Heart right ventricle (tissue), 16 donors: ENCODE measurements at regions of chr7 and their contacts with region 1.

Region 1: DNA sequence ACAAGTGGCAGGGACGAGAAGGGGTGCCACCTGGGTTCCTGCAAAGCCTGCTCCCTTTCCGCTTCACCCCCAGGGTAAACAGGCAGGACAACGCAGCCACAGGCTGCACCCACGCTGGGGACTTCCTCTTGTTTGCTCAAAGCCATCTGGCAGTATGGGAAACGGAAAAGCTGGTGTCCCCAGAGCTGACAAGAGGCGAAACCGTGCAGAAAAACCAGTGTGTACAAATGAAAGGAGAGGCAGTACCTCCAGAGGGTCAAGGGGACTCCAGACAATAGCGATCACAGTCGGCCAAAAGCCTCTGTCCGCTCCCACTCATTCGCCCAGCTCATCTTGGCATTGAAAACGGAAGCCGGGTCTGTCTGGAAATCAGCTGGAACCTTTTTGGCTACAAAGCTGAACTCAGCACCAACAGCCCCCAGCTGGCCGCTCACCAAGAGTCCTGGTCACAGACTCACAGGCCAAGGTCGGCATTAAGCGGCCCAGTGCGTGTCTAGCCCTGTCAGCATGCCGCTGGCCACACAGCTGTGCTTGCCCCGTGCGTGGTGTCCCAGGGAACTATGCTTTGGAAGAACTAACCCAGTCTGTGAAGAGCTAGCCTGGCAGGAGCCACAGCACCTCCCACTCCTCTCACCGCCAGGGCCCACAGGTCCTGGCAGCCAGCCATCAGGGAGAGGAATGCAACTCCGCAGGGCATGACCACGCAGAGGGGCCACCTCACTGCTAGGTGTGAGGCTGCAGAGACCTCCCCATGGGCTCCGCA is 10.4 kb downstream of the TNS3 start:
- DNase-seq: peak; percentile 76 to 83
- ATAC-seq: peak; percentile 69 to 87 (median 76)
- H3K4me3 ChIP-seq: peak overlapping the region in 6 of 10 donors; percentile 2 to 28 (median 10)
- H3K27ac ChIP-seq: peak overlapping the region; percentile 65 to 92 (median 78)
- H3K4me1 ChIP-seq: peaks cover 7 to 84% (median 58%) of the 10 kb centered on the region in 9 donors
- H3K27me3 ChIP-seq: no peaks in the 10 kb centered on the region
- CTCF ChIP-seq: peak in 1 of 9 donors; percentile 11

Region 2: DNA sequence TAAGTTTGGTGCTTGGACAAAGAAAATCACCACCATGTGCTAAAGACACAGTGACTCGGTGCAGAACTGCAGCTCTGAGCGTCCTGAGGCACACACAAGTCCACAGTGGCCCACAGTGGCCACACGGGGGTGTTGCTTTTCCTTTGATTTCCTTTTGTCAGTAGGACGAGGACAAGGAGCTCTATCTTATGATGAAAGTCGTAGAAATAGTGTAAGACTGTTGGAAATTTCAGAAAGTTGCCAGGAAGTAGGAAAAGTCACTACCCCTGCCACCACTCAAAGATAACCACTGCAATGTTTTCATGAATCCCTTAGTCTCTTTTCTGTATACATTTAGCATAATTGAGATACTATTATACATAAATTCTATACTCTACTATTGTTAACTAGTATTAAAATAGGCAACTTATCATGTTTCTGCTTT is 135.6 kb before region 1 on chr7:
- intact Hi-C with region 1: loop called in 3 of 10 experiments (anchors 10 kb)
- DNase-seq: peak; percentile 68 to 74
- ATAC-seq: peak; percentile 74 to 91 (median 88)
- H3K4me3 ChIP-seq: no peak overlapping the region
- H3K27ac ChIP-seq: no peak overlapping the region
- H3K4me1 ChIP-seq: peaks cover 0 to 10% (median 0%) of the 10 kb centered on the region in 9 donors
- H3K27me3 ChIP-seq: no peaks in the 10 kb centered on the region
- CTCF ChIP-seq: peak; percentile 46 to 87 (median 78)

Region 3: GRCh38 chr7:47444379-47445057 is 127.0 kb before region 1 on chr7:
- intact Hi-C with region 1: loop called in 3 of 10 experiments (anchors 10 kb)
- DNase-seq: no peak
- ATAC-seq: peak in 2 of 8 donors; percentile 16 to 40
- H3K4me3 ChIP-seq: no peak overlapping the region
- H3K27ac ChIP-seq: no peak overlapping the region
- H3K4me1 ChIP-seq: peaks cover 4 to 48% (median 23%) of the 10 kb centered on the region in 9 donors
- H3K27me3 ChIP-seq: no peaks in the 10 kb centered on the region
- CTCF ChIP-seq: peak; percentile 13 to 66 (median 50)

Region 4: DNA sequence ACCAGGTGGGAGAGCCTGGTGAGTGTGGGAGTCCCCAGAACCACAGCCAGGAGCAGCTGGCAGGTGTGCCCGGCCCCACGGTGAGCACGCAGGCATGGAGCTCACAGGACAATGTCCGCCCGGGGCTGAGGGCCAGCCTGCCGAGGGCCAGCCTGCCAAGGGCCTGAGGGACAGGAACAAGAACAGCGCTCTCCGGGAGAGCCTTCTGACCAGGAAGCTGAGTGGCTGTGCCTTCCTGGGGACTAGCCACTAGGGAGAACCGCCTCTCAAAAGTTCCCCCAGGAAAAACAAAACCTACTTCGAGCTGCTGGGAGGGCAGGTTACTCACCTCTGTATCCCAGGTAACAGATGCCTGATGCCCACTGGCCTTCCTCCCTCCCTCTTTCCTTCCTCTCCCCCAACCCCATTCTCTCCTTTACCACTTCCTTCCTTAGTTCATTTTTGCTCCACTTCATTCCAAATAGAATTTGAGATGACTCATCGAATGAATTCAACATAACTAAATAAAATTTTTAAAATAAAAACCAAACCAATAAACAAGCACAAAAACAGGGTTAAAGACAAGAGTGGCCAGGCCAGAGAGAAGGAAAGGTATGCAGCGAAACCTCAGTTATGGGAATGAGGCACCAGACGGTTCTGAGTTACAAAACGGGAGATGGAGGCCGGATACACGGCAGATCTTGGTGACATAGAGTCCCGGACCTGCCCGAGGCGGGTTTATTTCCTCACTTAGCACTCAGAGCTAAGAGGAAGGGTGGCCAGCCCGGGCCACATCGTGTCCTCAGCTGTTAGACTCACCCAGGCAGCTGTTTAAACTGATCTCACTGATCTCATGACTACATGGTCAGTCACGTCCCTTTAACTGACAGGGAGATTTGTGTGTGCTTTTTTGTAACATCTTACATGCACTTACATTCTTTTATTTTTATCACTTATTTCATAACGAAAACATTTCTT is 118.1 kb before region 1 on chr7:
- intact Hi-C with region 1: loop called in 5 of 10 experiments (anchors 5 to 10 kb)
- DNase-seq: peak; percentile 43 to 58
- ATAC-seq: peak; percentile 62 to 84 (median 76)
- H3K4me3 ChIP-seq: peak overlapping the region in 9 of 10 donors; percentile 1 to 44 (median 38)
- H3K27ac ChIP-seq: peak overlapping the region; percentile 36 to 90 (median 84)
- H3K4me1 ChIP-seq: peaks cover 14 to 62% (median 37%) of the 10 kb centered on the region in 9 donors
- H3K27me3 ChIP-seq: no peaks in the 10 kb centered on the region
- CTCF ChIP-seq: no peak

Region 5: GRCh38 chr7:47482013-47482875 is 89.3 kb before region 1 on chr7:
- intact Hi-C with region 1: loop called in 1 of 10 experiments (anchors 5 kb)
- DNase-seq: peak in 1 of 2 donors; percentile 70
- ATAC-seq: peak; percentile 70 to 89 (median 81)
- H3K4me3 ChIP-seq: peak overlapping the region in 1 of 10 donors; percentile 10
- H3K27ac ChIP-seq: peak overlapping the region; percentile 63 to 89 (median 85)
- H3K4me1 ChIP-seq: peaks cover 22 to 79% (median 61%) of the 10 kb centered on the region in 9 donors
- H3K27me3 ChIP-seq: no peaks in the 10 kb centered on the region
- CTCF ChIP-seq: no peak

Region 6: GRCh38 chr7:47493976-47494911 is 77.3 kb before region 1 on chr7:
- intact Hi-C with region 1: loop called in 1 of 10 experiments (anchors 5 kb)
- DNase-seq: peak; percentile 54
- ATAC-seq: peak in 7 of 8 donors; percentile 7 to 63 (median 36)
- H3K4me3 ChIP-seq: peak overlapping the region in 6 of 10 donors; percentile 12 to 39 (median 30)
- H3K27ac ChIP-seq: peak overlapping the region in 8 of 10 donors; percentile 3 to 72 (median 45)
- H3K4me1 ChIP-seq: peaks cover 7 to 71% (median 43%) of the 10 kb centered on the region in 9 donors
- H3K27me3 ChIP-seq: no peaks in the 10 kb centered on the region
- CTCF ChIP-seq: peak in 2 of 9 donors; percentile 12 to 15

Region 7: GRCh38 chr7:47818796-47819606 is 247.5 kb after region 1 on chr7:
- intact Hi-C with region 1: loop called in 1 of 10 experiments (anchors 10 kb)
- DNase-seq: peak; percentile 54 to 62
- ATAC-seq: peak in 6 of 8 donors; percentile 65 to 81 (median 71)
- H3K4me3 ChIP-seq: no peak overlapping the region
- H3K27ac ChIP-seq: no peak overlapping the region
- H3K4me1 ChIP-seq: peaks cover 0 to 20% (median 14%) of the 10 kb centered on the region in 9 donors
- H3K27me3 ChIP-seq: no peaks in the 10 kb centered on the region
- CTCF ChIP-seq: peak; percentile 71 to 99 (median 93)